ENCODE measurements at regions of chr1 and their contacts with region 1.

Region 1: DNA sequence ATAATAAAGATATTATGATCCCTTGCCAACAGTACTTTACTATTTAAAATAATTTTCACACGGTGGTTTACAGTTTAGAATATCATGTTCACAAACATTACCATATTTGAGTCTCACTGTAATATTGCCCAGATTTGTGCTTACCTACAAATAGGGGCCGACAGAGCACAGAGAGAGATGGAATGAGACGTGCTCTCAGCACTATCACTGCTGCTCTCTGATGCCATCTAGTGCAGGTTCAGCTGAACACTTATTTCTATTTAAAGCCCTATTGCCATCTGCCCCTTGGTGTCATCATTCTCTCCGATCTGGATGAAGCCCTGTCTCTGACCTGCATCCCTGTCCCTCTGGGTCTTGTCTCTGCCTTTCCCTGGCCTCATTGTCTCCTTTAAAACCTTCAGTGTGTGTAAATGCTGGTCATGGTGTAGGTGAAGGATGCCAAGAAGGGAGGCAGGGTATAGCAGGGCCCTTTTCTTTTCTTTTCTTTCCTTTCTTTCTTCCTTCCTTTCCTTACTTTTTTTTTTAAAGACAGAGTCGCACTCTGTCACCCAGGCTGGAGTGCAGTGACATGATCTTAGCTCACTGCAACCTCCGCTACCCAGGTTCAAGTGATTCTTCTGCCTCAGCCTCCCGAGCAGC is 6.9 kb upstream of the GPATCH4 start:
- DNase-seq: peak; percentile 62 to 74 (median 64)
- H3K4me3 ChIP-seq: no peak overlapping the region
- H3K4me3 Mint-ChIP-seq: no peak overlapping the region
- H3K27ac ChIP-seq: no peak overlapping the region
- H3K27ac Mint-ChIP-seq: no peak overlapping the region
- H3K4me1 ChIP-seq: peaks cover 0 to 3% of the 10 kb centered on the region in 2 donors
- H3K4me1 Mint-ChIP-seq: peaks cover 10% of the 10 kb centered on the region
- H3K27me3 ChIP-seq: peaks cover 0 to 5% of the 10 kb centered on the region in 2 donors
- H3K27me3 Mint-ChIP-seq: peaks cover 16 to 24% (median 22%) of the 10 kb centered on the region in 3 donors
- CTCF ChIP-seq: peak; percentile 80

Region 2: DNA sequence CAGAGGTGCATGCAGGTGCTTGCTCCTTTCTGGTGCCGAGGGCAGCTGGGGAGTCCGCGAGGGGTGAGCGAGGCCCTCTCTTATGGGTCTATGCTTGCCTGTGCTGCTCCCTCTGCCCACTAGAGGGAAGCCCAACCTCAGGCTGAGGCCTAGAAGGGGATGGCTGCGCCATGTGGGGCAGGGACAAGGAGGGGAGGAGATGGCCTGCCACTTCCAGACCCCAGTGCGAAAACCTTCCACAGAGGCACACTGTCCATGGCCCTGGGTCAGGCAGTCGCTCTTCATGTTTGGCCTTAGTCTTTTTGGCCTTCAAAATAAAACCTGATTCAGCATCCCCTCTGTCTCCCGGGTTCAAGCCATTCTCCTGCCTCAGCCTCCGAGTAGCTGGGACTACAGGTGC is 225.1 kb before region 1 on chr1:
- intact Hi-C with region 1: loop called (anchors 5 to 10 kb)
- DNase-seq: peak in 2 of 3 donors; percentile 49 to 57
- H3K4me3 ChIP-seq: no peak overlapping the region
- H3K4me3 Mint-ChIP-seq: no peak overlapping the region
- H3K27ac ChIP-seq: no peak overlapping the region
- H3K27ac Mint-ChIP-seq: no peak overlapping the region
- H3K4me1 ChIP-seq: peaks cover 9% of the 10 kb centered on the region in 2 donors
- H3K4me1 Mint-ChIP-seq: peaks cover 14% of the 10 kb centered on the region
- H3K27me3 ChIP-seq: peaks cover 13 to 20% of the 10 kb centered on the region in 2 donors
- H3K27me3 Mint-ChIP-seq: peaks cover 23 to 29% (median 25%) of the 10 kb centered on the region in 3 donors
- CTCF ChIP-seq: peak; percentile 90

Region 3: GRCh38 chr1:156480411-156481192 is 127.6 kb before region 1 on chr1:
- intact Hi-C with region 1: loop called (anchors 5 kb)
- DNase-seq: peak; percentile 60 to 73 (median 64)
- H3K4me3 ChIP-seq: no peak overlapping the region
- H3K4me3 Mint-ChIP-seq: peak overlapping the region; percentile 35 to 47
- H3K27ac ChIP-seq: peak overlapping the region; percentile 9 to 67
- H3K27ac Mint-ChIP-seq: peak overlapping the region; percentile 82 to 92 (median 89)
- H3K4me1 ChIP-seq: peaks cover 41 to 52% of the 10 kb centered on the region in 2 donors
- H3K4me1 Mint-ChIP-seq: peaks cover 60% of the 10 kb centered on the region
- H3K27me3 ChIP-seq: no peaks in the 10 kb centered on the region
- H3K27me3 Mint-ChIP-seq: peaks cover 0 to 2% (median 1%) of the 10 kb centered on the region in 3 donors
- CTCF ChIP-seq: peak; percentile 85

Region 4: DNA sequence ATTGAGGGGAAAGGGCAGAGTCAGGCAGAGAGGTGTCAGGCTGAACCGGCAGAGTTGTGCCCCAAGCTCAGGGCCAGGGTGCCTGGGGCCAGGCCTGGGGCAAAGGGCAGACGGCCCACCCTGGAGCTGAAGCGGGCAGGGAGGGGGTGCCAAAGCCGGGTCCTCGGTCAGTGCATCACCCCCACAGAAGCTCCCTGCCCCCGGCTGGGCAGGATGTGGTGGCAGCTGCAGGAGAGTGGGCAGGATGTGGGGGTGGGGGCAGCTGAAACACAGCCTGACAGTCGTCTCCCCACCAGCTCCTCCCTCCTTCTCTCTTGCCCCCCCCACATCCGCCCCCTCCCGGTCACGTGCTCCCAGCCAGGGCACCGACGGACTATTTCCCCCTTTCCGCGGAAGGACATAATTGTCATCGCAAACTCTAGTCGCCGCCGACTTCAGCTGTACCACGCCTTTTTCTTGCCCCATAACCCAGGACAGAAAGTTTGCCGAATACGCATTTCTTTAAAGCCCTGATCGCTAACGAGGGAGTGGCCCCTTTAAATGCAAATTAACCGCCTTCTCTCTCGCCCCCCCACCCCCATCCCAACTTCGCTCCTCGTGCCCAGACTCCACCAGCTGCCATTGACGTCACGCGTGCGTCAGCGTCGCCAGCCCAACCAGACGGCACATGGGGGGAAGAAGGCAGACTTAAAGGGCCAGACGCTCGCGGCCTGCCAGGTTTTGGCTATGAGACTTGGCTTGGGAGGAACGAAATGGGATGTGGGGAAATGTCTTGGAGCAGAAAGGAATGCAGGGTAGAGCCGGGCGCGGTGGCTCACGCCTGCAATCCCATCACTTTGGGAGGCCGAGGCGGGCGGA is 103.1 kb before region 1 on chr1:
- intact Hi-C with region 1: no loop called
- DNase-seq: peak; percentile 96 to 100 (median 99)
- H3K4me3 ChIP-seq: peak overlapping the region; percentile 4 to 99 (median 32)
- H3K4me3 Mint-ChIP-seq: peak overlapping the region; percentile 72 to 90
- H3K27ac ChIP-seq: peak overlapping the region; percentile 91 to 98
- H3K27ac Mint-ChIP-seq: peak overlapping the region; percentile 95 to 100 (median 99)
- H3K4me1 ChIP-seq: peaks cover 68 to 83% of the 10 kb centered on the region in 2 donors
- H3K4me1 Mint-ChIP-seq: peaks cover 63% of the 10 kb centered on the region
- H3K27me3 ChIP-seq: no peaks in the 10 kb centered on the region
- H3K27me3 Mint-ChIP-seq: peaks cover 0 to 2% (median 0%) of the 10 kb centered on the region in 3 donors
- CTCF ChIP-seq: no peak

Region 5: DNA sequence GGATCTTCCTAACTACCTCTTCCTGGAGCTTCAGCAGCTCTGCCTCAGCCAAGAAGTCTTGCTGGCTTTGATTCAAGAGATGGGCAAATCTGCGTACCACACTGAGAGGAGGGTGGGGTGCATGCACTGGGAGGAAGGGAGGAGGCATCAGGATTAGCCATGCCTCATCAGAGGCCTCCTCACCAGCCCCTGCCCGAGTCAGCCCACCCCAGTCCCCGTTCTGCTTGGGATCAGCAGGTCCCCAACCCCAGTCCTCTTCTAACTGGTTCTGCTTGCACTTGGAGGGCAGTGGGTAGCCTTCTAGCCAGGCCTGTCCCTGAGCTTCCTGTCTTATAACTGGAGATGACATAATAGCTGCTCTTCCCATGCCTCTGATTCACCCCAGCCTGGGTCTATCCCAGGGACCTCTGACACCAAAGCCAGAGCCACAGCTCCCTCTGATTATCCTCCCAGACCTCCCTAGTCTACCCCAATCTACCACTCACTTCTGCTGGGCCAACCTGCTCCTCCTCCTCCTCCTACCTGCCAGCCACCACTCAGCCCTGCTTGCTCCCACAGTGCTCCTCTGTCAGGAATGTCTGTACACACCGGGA is 67.3 kb before region 1 on chr1:
- intact Hi-C with region 1: no loop called
- DNase-seq: peak in 2 of 3 donors; percentile 20 to 51
- H3K4me3 ChIP-seq: no peak overlapping the region
- H3K4me3 Mint-ChIP-seq: no peak overlapping the region
- H3K27ac ChIP-seq: peak overlapping the region in 1 of 2 donors; percentile 15
- H3K27ac Mint-ChIP-seq: peak overlapping the region in 3 of 7 donors; percentile 25 to 41 (median 38)
- H3K4me1 ChIP-seq: no peaks in the 10 kb centered on the region
- H3K4me1 Mint-ChIP-seq: peaks cover 17% of the 10 kb centered on the region
- H3K27me3 ChIP-seq: no peaks in the 10 kb centered on the region
- H3K27me3 Mint-ChIP-seq: peaks cover 0 to 4% (median 0%) of the 10 kb centered on the region in 3 donors
- CTCF ChIP-seq: no peak

Region 6: DNA sequence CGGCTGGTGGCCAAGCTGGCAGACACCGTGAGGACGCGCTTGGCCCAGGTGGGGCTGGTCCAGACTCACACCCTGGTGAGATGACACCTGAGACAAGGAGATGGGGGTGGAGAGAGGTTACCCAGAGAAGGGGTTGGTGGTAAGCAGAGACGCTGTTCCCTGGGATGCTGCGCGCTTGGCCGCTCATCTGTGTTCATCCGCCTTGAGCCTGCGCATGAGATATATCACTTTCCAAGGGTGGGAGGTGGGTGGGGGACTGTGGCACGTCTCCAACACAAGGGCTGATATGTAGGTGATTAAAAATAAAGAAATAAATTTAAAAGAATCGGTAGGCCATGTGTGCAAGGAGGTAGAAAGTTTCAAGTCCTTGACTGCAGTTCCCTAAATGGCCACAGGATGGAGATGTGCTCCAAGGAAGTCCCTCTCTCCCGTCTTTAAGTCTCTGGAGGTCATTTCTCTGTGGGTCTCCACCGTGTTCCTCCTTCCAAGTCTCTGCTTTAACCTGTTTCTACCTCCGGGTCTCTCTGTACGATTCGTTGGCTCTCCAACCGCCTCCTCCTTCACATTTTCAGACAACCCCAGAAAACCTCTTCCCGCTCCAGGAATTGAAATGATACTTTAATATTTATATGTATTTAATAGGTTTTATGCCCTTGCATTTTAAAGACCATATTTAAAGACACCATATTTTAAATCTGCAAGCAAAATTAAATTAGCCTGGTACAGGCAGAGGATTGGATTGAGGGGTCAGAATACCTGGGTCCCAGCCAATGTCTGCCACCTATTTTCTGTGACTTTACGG is 24.1 kb before region 1 on chr1:
- intact Hi-C with region 1: loop called (anchors 2 kb)
- DNase-seq: peak; percentile 67 to 79 (median 78)
- H3K4me3 ChIP-seq: no peak overlapping the region
- H3K4me3 Mint-ChIP-seq: no peak overlapping the region
- H3K27ac ChIP-seq: no peak overlapping the region
- H3K27ac Mint-ChIP-seq: no peak overlapping the region
- H3K4me1 ChIP-seq: peaks cover 16 to 20% of the 10 kb centered on the region in 2 donors
- H3K4me1 Mint-ChIP-seq: peaks cover 28% of the 10 kb centered on the region
- H3K27me3 ChIP-seq: no peaks in the 10 kb centered on the region
- H3K27me3 Mint-ChIP-seq: peaks cover 0 to 3% (median 2%) of the 10 kb centered on the region in 3 donors
- CTCF ChIP-seq: peak; percentile 96